Mammary epithelial cell (primary cell): ENCODE measurements at regions of chr6 and their contacts with region 1.

Region 1: GRCh38 chr6:85460921-85461797 is 11.3 kb downstream of the NT5E start:
- DNase-seq: peak; percentile 86
- H3K4me3 ChIP-seq: no peak overlapping the region
- H3K27ac ChIP-seq: peak overlapping the region; percentile 61
- H3K4me1 ChIP-seq: peaks cover 100% of the 10 kb centered on the region
- H3K27me3 ChIP-seq: no peaks in the 10 kb centered on the region
- CTCF ChIP-seq: no peak

Region 2: GRCh38 chr6:85360794-85361642 is 100.1 kb before region 1 on chr6:
- CTCF ChIA-PET with region 1: interaction called, 3 read pairs
- dilution Hi-C with region 1: loop called (anchors 5 kb)
- in situ Hi-C with region 1: no loop called
- intact Hi-C with region 1: no loop called
- DNase-seq: peak; percentile 93
- H3K4me3 ChIP-seq: no peak overlapping the region
- H3K27ac ChIP-seq: peak overlapping the region; percentile 83
- H3K4me1 ChIP-seq: peaks cover 44% of the 10 kb centered on the region
- H3K27me3 ChIP-seq: no peaks in the 10 kb centered on the region
- CTCF ChIP-seq: no peak